Endothelial cell of umbilical vein (primary cell): ENCODE measurements at regions of chr6 and their contacts with region 1.

Region 1: GRCh38 chr6:107657755-107658461 is 166.2 kb downstream of the SCML4 start:
- DNase-seq: peak; percentile 79
- H3K4me3 ChIP-seq: peak overlapping the region; percentile 5 to 33 (median 11)
- H3K27ac ChIP-seq: peak overlapping the region; percentile 48
- H3K4me1 ChIP-seq: peaks cover 23% of the 10 kb centered on the region
- H3K27me3 ChIP-seq: no peaks in the 10 kb centered on the region
- CTCF ChIP-seq: peak; percentile 17 to 58
- POLR2A ChIP-seq: no peak

Region 2: GRCh38 chr6:107132330-107132954 is 525.5 kb before region 1 on chr6:
- CTCF ChIA-PET with region 1: interaction called, 6 read pairs
- POLR2A ChIA-PET with region 1: no interaction called
- dilution Hi-C with region 1: no loop called
- intact Hi-C with region 1: loop called (anchors 5 kb)
- DNase-seq: peak; percentile 32
- H3K4me3 ChIP-seq: no peak overlapping the region
- H3K27ac ChIP-seq: no peak overlapping the region
- H3K4me1 ChIP-seq: peaks cover 6% of the 10 kb centered on the region
- H3K27me3 ChIP-seq: no peaks in the 10 kb centered on the region
- CTCF ChIP-seq: peak; percentile 38 to 46
- POLR2A ChIP-seq: no peak

Region 3: DNA sequence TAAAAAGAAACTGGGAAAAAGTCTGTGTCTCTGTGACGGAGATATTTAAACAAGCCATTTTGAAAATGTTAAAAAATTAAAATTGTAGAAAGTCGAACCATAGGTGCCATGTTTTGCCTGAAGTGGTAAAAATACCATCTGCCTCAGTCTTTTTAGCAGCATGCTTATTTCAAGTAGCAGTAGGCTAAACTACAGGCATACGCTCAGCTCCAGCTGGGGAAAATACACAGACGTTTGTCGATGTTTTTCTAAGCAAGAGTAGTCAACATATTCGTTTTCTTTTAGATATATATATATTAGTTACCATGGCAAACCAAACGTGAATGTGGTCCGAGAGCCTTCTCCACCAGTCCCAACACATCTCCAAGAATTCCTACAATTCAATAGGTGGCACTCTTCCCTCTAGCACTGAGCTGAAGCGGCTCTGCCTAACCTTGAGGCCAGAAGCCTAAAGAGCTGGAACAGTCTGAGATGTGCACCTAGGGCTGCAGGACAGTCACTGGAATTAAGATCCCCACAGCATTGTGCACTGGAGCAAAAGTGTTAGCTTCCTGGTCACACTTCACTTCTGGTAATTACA is 472.4 kb before region 1 on chr6:
- CTCF ChIA-PET with region 1: no interaction called
- POLR2A ChIA-PET with region 1: no interaction called
- dilution Hi-C with region 1: no loop called
- intact Hi-C with region 1: loop called (anchors 5 kb)
- DNase-seq: peak; percentile 22
- H3K4me3 ChIP-seq: no peak overlapping the region
- H3K27ac ChIP-seq: no peak overlapping the region
- H3K4me1 ChIP-seq: no peaks in the 10 kb centered on the region
- H3K27me3 ChIP-seq: no peaks in the 10 kb centered on the region
- CTCF ChIP-seq: peak in 1 of 2 donors; percentile 16
- POLR2A ChIP-seq: no peak

Region 4: GRCh38 chr6:107642095-107642860 is 15.6 kb before region 1 on chr6:
- CTCF ChIA-PET with region 1: interaction called, 10 read pairs
- POLR2A ChIA-PET with region 1: no interaction called
- dilution Hi-C with region 1: no loop called
- intact Hi-C with region 1: no loop called
- DNase-seq: no peak
- H3K4me3 ChIP-seq: no peak overlapping the region
- H3K27ac ChIP-seq: no peak overlapping the region
- H3K4me1 ChIP-seq: peaks cover 12% of the 10 kb centered on the region
- H3K27me3 ChIP-seq: no peaks in the 10 kb centered on the region
- CTCF ChIP-seq: no peak
- POLR2A ChIP-seq: no peak